Stomach (tissue), 19 donors: ENCODE measurements at regions of chr7 and their contacts with region 1.

Region 1: DNA sequence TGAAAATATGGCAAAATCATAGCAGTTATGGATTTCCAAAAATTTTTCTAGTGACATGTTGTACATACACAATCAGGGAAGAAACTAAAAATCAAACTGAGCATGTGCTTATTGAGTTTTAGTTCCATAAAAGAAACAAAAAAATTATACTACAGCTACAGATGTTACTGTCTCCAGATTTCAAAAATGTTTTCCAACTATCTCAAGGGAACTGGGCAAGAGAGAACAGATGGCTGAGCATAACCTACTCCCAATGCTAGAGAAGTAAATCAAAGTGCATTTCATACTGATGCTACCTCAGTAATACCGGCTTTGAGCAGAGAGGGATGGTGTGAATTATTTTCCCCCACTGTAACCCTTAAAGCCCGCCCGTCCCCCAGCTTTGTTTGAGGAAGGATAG is 40.7 kb upstream of the KMT2C start:
- DNase-seq: no peak
- H3K4me3 ChIP-seq: no peak overlapping the region
- H3K27ac ChIP-seq: no peak overlapping the region
- H3K4me1 ChIP-seq: peaks cover 0 to 7% (median 3%) of the 10 kb centered on the region in 4 donors
- H3K27me3 ChIP-seq: no peaks in the 10 kb centered on the region
- CTCF ChIP-seq: no peak
- EP300 ChIP-seq: no peak
- POLR2A ChIP-seq: no peak

Region 2: GRCh38 chr7:152328234-152328633 is 148.3 kb before region 1 on chr7:
- intact Hi-C with region 1: no loop called
- DNase-seq: no peak
- H3K4me3 ChIP-seq: no peak overlapping the region
- H3K27ac ChIP-seq: no peak overlapping the region
- H3K4me1 ChIP-seq: peaks cover 0 to 6% (median 3%) of the 10 kb centered on the region in 4 donors
- H3K27me3 ChIP-seq: no peaks in the 10 kb centered on the region
- CTCF ChIP-seq: no peak
- EP300 ChIP-seq: no peak
- POLR2A ChIP-seq: no peak

Region 3: DNA sequence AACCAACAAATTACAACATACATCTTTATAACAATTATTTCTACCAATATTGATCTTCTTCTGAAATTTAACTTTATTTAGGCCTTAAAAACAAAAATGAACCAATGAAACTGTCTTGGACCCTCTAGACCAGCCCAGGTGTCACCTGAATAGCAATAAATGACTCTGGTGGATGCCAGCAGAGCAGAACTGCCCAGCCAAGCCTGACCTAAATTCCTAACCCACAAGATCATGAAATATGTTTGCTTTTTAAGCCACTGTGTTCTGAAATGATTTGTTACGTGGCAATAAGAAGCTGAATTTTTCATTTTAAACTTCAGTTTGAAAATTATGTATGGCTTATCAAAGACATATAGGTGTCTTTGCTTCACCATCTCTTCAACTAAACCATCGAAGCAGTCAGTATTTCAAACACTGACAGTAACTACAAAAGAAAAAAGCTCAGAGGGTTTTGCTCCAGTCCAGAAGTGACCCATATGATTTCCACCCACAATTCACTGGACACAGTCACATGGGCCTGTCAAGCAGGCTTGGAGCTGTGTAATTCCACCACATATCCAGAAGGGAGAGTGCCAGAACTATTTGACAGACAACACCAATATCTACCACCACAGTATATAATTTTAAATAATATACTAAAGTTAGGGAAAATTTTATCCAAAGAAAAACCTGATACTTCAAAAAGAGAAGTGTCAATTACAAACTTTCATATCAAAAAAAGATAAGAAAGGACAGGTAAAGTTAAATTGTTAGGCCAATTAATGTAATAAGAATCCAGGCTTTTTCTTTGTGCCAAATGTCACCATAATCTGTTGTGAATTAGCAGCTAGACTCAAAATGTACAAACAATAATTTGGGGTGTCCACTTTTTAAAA is 135.3 kb before region 1 on chr7:
- intact Hi-C with region 1: loop called (anchors 10 kb)
- DNase-seq: peak; percentile 43 to 70
- H3K4me3 ChIP-seq: no peak overlapping the region
- H3K27ac ChIP-seq: peak overlapping the region in 3 of 5 donors; percentile 3 to 22 (median 14)
- H3K4me1 ChIP-seq: peaks cover 18 to 68% (median 42%) of the 10 kb centered on the region in 4 donors
- H3K27me3 ChIP-seq: no peaks in the 10 kb centered on the region
- CTCF ChIP-seq: peak in 4 of 7 experiments; percentile 22 to 59 (median 38)
- EP300 ChIP-seq: no peak
- POLR2A ChIP-seq: no peak

Region 4: GRCh38 chr7:152619027-152619739 is 142.6 kb after region 1 on chr7:
- intact Hi-C with region 1: no loop called
- DNase-seq: no peak
- H3K4me3 ChIP-seq: no peak overlapping the region
- H3K27ac ChIP-seq: no peak overlapping the region
- H3K4me1 ChIP-seq: peaks cover 0 to 9% (median 4%) of the 10 kb centered on the region in 4 donors
- H3K27me3 ChIP-seq: no peaks in the 10 kb centered on the region
- CTCF ChIP-seq: no peak
- EP300 ChIP-seq: no peak
- POLR2A ChIP-seq: no peak

Region 5: GRCh38 chr7:152956006-152956405 is 479.5 kb after region 1 on chr7:
- intact Hi-C with region 1: no loop called
- DNase-seq: no peak
- H3K4me3 ChIP-seq: no peak overlapping the region
- H3K27ac ChIP-seq: no peak overlapping the region
- H3K4me1 ChIP-seq: no peaks in the 10 kb centered on the region
- H3K27me3 ChIP-seq: no peaks in the 10 kb centered on the region
- CTCF ChIP-seq: no peak
- EP300 ChIP-seq: no peak
- POLR2A ChIP-seq: no peak